Right ventricle myocardium superior (tissue), 1 donor: ENCODE measurements at regions of chr7 and their contacts with region 1.

Region 1: GRCh38 chr7:151511946-151512345 is 7.7 kb downstream of the RHEB start:
- DNase-seq: no peak
- ATAC-seq: no peak

Region 2: DNA sequence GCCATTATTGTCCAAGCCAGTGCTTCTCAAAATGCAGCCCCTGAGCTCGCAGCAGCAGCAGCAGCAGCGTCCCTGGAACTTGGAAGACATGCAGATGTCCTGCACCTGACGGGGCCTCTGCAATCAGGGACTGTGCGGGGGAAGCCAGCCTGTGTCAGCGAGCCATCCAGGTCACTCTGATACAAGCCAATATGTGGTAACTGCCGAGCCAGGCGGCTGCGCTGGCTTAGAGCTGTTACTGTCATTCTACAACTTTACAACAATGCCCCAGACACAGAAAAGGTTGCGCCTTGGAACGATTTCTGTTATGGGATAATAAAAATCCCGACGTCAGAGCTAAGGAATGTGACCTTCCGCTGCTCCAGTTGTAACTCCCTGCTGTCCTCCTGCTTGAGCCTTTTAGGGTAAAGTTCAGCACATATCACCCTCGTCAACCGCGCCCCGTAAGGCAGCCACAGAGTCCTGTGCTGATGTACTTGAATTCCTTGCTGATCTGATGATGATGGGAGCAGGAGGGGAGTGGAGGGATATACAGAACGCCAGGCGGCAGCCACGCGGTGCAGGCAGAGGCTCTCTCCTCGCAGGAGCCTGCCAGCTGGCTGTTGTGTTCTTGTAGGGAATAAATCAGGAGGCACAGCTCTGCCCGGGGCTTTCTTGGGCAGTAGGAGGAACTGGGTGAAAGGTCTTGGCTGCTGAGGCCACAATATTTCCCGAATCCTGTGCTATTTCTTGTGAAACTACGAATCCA is 52.0 kb before region 1 on chr7:
- intact Hi-C with region 1: loop called (anchors 5 kb)
- DNase-seq: peak; percentile 89
- ATAC-seq: peak; percentile 89

Region 3: GRCh38 chr7:151558575-151558974 is 46.6 kb after region 1 on chr7:
- intact Hi-C with region 1: no loop called
- DNase-seq: no peak
- ATAC-seq: no peak